ENCODE measurements at regions of chr16 and their contacts with region 1.

Region 1: GRCh38 chr16:30445408-30446202 is at the start of gene SEPHS2:
- DNase-seq: peak; percentile 88
- H3K4me3 ChIP-seq: peak within 1 kb of the TSS; percentile 78 to 91 (median 88)
- H3K27ac ChIP-seq: peak within 1 kb of the TSS; percentile 89 to 96 (median 93)
- H3K4me1 ChIP-seq: peaks cover 9 to 36% (median 18%) of the 10 kb centered on the region in 3 donors
- H3K27me3 ChIP-seq: no peaks in the 10 kb centered on the region
- CTCF ChIP-seq: peak in 5 of 6 experiments; percentile 16 to 40 (median 23)
- POLR2A ChIP-seq: peak in 3 of 4 donors; percentile 91 to 93 (median 92)
- total RNA-seq, gene SEPHS2: 17.7 to 23.5 (median 19.7) TPM

Region 2: GRCh38 chr16:30526823-30527635 is 81.4 kb after region 1 on chr16:
- intact Hi-C with region 1: loop called (anchors 5 kb)
- DNase-seq: peak; percentile 88
- H3K4me3 ChIP-seq: peak overlapping the region; percentile 71 to 92 (median 82)
- H3K27ac ChIP-seq: peak overlapping the region; percentile 93 to 100 (median 96)
- H3K4me1 ChIP-seq: peaks cover 16 to 58% (median 17%) of the 10 kb centered on the region in 3 donors
- H3K27me3 ChIP-seq: no peaks in the 10 kb centered on the region
- CTCF ChIP-seq: peak; percentile 8 to 37 (median 30)
- POLR2A ChIP-seq: peak in 2 of 4 donors; percentile 54 to 57

Measured in esophagus squamous epithelium (tissue), 5 donors.